ENCODE measurements at regions of chr4 and their contacts with region 1.

Region 1: GRCh38 chr4:129093191-129093920 is at the start of gene SCLT1:
- DNase-seq: peak; percentile 99
- ATAC-seq: peak; percentile 96
- H3K4me3 ChIP-seq: peak within 1 kb of the TSS; percentile 87
- H3K27ac ChIP-seq: peak within 1 kb of the TSS; percentile 86
- H3K4me1 ChIP-seq: no peaks in the 10 kb centered on the region
- H3K27me3 ChIP-seq: no peaks in the 10 kb centered on the region
- CTCF ChIP-seq: no peak
- POLR2A ChIP-seq: peak; percentile 93
- RAD21 ChIP-seq: no peak
- total RNA-seq, gene SCLT1: 7.7 and 15.3 TPM in 2 replicates

Region 2: DNA sequence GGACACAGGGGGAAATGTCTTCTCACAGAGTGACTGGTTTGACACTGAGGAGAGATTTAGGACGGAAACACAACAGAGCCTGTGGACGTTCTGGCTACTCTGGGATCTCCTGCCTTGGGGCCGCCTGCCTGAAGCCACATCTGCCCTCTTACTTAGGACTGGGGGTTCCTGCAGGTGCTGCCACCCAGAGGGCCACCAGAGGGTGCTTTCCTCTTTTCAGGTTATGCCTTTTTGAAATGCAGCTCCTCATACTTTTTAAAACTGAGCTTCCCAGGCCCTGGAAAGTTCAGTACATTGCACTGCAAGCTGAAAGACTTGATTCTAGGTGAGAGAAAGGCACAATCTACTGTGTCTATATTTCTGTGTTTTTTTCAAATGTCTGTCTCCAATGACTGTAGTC is 713.5 kb before region 1 on chr4:
- CTCF ChIA-PET with region 1: no interaction called
- POLR2A ChIA-PET with region 1: no interaction called
- dilution Hi-C with region 1: no loop called
- in situ Hi-C with region 1: no loop called
- intact Hi-C with region 1: loop called (anchors 10 kb)
- DNase-seq: peak; percentile 49
- ATAC-seq: peak; percentile 27; the same call in 1 of the 2 replicates
- H3K4me3 ChIP-seq: no peak overlapping the region
- H3K27ac ChIP-seq: no peak overlapping the region
- H3K4me1 ChIP-seq: peaks cover 10% of the 10 kb centered on the region
- H3K27me3 ChIP-seq: no peaks in the 10 kb centered on the region
- CTCF ChIP-seq: peak; percentile 55
- POLR2A ChIP-seq: no peak
- RAD21 ChIP-seq: peak; percentile 53

Region 3: GRCh38 chr4:128871948-128872347 is 221.4 kb before region 1 on chr4:
- CTCF ChIA-PET with region 1: no interaction called
- POLR2A ChIA-PET with region 1: no interaction called
- dilution Hi-C with region 1: no loop called
- in situ Hi-C with region 1: loop called (anchors 10 kb)
- intact Hi-C with region 1: loop called (anchors 2 kb)
- DNase-seq: peak; percentile 99
- ATAC-seq: peak; percentile 95
- H3K4me3 ChIP-seq: no peak overlapping the region
- H3K27ac ChIP-seq: peak overlapping the region; percentile 96
- H3K4me1 ChIP-seq: peaks cover 12% of the 10 kb centered on the region
- H3K27me3 ChIP-seq: no peaks in the 10 kb centered on the region
- CTCF ChIP-seq: no peak
- POLR2A ChIP-seq: no peak
- RAD21 ChIP-seq: peak; percentile 9; the same call in 1 of the 2 replicates